Activated CD8-positive, alpha-beta T cell treated with anti-CD3 and anti-CD28 coated beads for 36 hours (primary cell): ENCODE measurements at regions of chr18 and their contacts with region 1.

Region 1: GRCh38 chr18:70469916-70470315 is 181.1 kb downstream of the SOCS6 start:
- DNase-seq: no peak
- ATAC-seq: no peak
- H3K4me3 Mint-ChIP-seq: no peak overlapping the region
- H3K27ac Mint-ChIP-seq: no peak overlapping the region
- H3K4me1 Mint-ChIP-seq: no peaks in the 10 kb centered on the region
- H3K27me3 Mint-ChIP-seq: peaks cover under 1% of the 10 kb centered on the region
- CTCF ChIP-seq: no peak

Region 2: DNA sequence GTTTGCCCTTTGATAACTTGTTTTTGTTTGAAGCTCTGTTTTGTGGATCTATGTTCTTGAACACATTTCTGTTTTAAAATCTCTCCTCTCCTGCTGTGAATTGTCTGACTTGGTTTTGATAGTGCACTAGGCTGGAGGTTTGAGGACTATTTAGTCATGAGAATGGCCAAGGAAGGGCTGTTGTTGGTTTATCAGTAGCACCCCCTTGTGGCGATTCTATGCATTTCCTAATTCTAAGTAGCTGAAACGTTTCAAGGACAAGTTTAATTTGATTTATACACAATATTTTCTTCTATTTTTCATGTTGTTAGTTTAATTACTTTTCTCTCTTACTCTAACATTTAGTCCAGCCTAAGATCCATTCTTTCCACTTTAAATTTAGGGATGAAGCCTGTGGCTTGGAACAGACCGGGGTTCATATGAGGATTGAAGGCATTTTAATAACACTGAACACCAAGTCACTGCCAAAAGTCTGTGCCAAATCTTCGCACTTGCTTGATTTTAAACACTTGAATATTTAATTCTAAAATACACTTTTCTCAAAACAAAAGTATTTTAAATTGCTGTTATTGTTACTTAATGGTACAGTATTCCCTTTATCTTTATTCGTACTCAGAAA is 15.1 kb before region 1 on chr18:
- CTCF ChIA-PET with region 1: interaction called, 11 read pairs
- POLR2A ChIA-PET with region 1: no interaction called
- intact Hi-C with region 1: no loop called
- DNase-seq: peak; percentile 39
- ATAC-seq: peak; percentile 64
- H3K4me3 Mint-ChIP-seq: no peak overlapping the region
- H3K27ac Mint-ChIP-seq: no peak overlapping the region
- H3K4me1 Mint-ChIP-seq: no peaks in the 10 kb centered on the region
- H3K27me3 Mint-ChIP-seq: peaks cover 1% of the 10 kb centered on the region
- CTCF ChIP-seq: peak; percentile 81

Region 3: GRCh38 chr18:70491734-70492348 is 21.9 kb after region 1 on chr18:
- CTCF ChIA-PET with region 1: interaction called, 44 read pairs
- POLR2A ChIA-PET with region 1: no interaction called
- intact Hi-C with region 1: no loop called
- DNase-seq: peak; percentile 73
- ATAC-seq: peak; percentile 55
- H3K4me3 Mint-ChIP-seq: no peak overlapping the region
- H3K27ac Mint-ChIP-seq: no peak overlapping the region
- H3K4me1 Mint-ChIP-seq: peaks cover 6% of the 10 kb centered on the region
- H3K27me3 Mint-ChIP-seq: peaks cover 3% of the 10 kb centered on the region
- CTCF ChIP-seq: peak; percentile 81